Caco-2 (cell line): ENCODE measurements at regions of chr6 and their contacts with region 1.

Region 1: DNA sequence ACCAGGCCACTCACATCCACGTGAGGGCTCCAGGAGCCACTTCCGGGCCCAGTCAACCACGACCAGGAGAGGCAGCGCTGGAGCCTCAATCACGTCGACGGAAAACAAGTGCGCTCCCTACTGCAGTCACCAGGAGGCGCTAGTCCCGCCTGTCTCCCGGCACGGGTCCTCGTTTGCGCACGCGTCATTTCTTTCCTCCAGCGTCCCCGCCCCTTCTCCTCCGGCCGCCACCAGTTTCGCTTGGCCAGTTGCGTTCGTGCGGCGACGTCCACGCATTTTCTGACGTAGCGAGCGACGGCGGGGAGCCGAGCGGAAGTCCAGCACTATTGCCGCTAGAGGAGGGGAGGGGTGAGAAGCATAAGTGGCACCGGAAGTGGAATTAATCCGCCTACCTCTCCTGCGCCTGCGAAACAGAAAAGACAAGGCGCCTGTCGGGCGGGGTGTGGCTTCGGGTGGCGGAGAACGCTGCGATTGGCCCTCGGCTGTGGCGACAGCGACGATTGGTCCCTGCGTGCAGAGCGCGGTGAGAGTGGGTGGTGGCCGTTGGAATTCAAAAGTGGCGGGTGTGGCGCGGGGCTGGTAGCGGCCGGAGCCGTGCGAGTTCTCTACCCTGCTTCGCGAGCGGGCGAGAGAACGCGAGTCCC is at the start of gene KIFC1:
- DNase-seq: peak; percentile 99
- H3K4me3 ChIP-seq: peak within 1 kb of the TSS; percentile 91
- H3K4me3 Mint-ChIP-seq: peak within 1 kb of the TSS; percentile 85
- H3K27ac Mint-ChIP-seq: peak within 1 kb of the TSS; percentile 81
- H3K4me1 ChIP-seq: peaks cover 12% of the 10 kb centered on the region
- H3K4me1 Mint-ChIP-seq: peaks cover 29% of the 10 kb centered on the region
- H3K27me3 ChIP-seq: no peaks in the 10 kb centered on the region
- H3K27me3 Mint-ChIP-seq: no peaks in the 10 kb centered on the region
- CTCF ChIP-seq: peak; percentile 89 to 95
- total RNA-seq, gene KIFC1: 65.3 and 65.4 TPM in 2 replicates

Region 2: DNA sequence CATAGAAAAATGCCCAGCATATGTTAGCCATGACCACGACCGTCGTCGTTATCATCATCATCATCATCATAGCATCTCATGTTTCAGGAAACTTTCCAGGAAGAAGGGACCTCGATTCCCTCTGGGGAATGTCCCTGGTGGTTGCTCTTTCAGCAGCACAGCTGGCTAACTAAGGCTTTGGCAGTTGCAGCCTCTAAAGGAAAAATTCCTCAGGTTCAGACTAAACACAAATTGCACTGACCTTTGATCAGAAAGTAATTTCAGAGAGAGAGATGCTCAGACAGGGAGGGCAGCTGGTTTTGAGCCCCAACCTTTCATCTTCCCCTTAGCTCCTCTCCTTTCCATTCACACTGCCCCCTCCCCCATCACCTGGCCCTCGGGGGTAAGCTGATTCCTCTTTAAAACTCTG is 1451.1 kb before region 1 on chr6:
- CTCF ChIA-PET with region 1: no interaction called
- POLR2A ChIA-PET with region 1: no interaction called
- intact Hi-C with region 1: loop called (anchors 5 kb)
- DNase-seq: peak; percentile 66 to 73
- H3K4me3 ChIP-seq: no peak overlapping the region
- H3K4me3 Mint-ChIP-seq: peak overlapping the region; percentile 42
- H3K27ac Mint-ChIP-seq: peak overlapping the region; percentile 89
- H3K4me1 ChIP-seq: peaks cover 28% of the 10 kb centered on the region
- H3K4me1 Mint-ChIP-seq: peaks cover 26% of the 10 kb centered on the region
- H3K27me3 ChIP-seq: no peaks in the 10 kb centered on the region
- H3K27me3 Mint-ChIP-seq: no peaks in the 10 kb centered on the region
- CTCF ChIP-seq: peak; percentile 8

Region 3: DNA sequence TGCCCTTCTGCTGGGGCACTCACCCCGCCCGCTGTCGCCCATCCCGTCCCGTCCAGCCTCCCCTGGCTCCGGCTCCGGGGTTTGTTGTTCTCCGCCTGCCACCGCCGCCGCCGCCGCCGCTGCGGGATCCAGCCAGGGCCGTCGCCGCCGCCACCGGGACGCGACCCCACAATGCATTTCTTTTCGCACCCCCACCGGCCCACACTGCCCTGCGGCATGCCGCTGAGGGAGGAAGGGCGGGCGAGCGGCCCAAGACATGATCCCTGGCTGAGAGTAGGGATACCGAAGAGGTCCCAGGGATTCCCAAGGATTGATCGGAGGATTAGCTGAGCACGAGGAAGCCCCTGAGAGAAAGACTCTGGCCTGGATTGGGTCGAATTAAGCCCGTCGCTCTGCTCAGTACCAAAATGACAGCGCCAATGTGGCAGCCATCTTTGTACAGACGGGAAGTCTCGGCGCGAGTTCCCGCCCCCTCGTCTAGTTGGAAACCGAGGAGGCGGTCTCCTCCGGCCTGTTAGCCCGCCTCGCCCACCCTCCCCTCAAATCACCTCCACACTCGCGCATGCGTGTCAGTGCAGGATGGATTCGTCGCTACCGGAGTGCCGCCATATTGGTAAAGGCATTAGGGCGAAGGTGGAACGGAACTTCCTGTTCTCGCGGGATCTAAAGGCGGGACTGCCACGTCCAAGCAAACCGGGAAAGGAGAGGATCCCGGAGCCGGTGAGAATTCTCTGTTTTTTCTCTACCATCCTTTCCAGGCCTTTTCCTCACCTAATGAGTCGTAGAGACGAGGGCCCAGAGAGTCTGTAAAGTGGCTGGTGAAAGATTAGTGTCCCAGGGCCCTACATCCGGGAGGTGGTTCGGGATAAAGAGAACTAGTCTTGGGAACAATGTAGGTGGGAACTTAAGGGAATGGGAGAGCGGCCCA is 190.9 kb before region 1 on chr6 and contains the starts of genes RXRB and SLC39A7:
- CTCF ChIA-PET with region 1: no interaction called
- POLR2A ChIA-PET with region 1: no interaction called
- intact Hi-C with region 1: loop called (anchors 2 kb)
- DNase-seq: peak; percentile 97 to 99
- H3K4me3 ChIP-seq: peak within 1 kb of the TSS; percentile 67
- H3K4me3 Mint-ChIP-seq: peak within 1 kb of the TSS; percentile 100
- H3K27ac Mint-ChIP-seq: peak within 1 kb of the TSS; percentile 99
- H3K4me1 ChIP-seq: peaks cover 29% of the 10 kb centered on the region
- H3K4me1 Mint-ChIP-seq: peaks cover 43% of the 10 kb centered on the region
- H3K27me3 ChIP-seq: no peaks in the 10 kb centered on the region
- H3K27me3 Mint-ChIP-seq: no peaks in the 10 kb centered on the region
- CTCF ChIP-seq: no peak
- total RNA-seq, gene RXRB: 29.5 and 30.4 TPM in 2 replicates
- total RNA-seq, gene SLC39A7: 140 and 141 TPM in 2 replicates

Region 4: DNA sequence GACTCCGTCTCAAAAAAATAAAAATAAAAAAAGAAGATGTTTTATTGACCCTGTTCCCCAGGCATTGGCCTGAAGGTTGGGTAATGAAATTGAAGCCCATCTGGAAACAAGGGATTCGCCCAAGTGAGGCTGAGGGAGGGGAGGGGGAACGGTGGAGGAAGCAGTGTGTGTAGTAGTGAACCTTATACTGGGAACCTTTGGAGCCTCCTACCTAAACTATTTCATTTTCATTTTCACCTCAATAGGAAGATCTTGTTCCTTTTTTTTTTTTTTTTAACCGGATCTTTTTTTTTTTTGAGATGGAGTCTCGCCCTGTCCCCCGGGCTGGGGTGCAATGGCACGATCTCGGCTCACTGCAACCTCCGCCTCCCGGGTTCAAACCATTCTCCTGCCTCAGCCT is 60.7 kb before region 1 on chr6:
- CTCF ChIA-PET with region 1: no interaction called
- POLR2A ChIA-PET with region 1: no interaction called
- intact Hi-C with region 1: no loop called
- DNase-seq: no peak
- H3K4me3 ChIP-seq: no peak overlapping the region
- H3K4me3 Mint-ChIP-seq: no peak overlapping the region
- H3K27ac Mint-ChIP-seq: no peak overlapping the region
- H3K4me1 ChIP-seq: no peaks in the 10 kb centered on the region
- H3K4me1 Mint-ChIP-seq: no peaks in the 10 kb centered on the region
- H3K27me3 ChIP-seq: no peaks in the 10 kb centered on the region
- H3K27me3 Mint-ChIP-seq: no peaks in the 10 kb centered on the region
- CTCF ChIP-seq: no peak

Region 5: DNA sequence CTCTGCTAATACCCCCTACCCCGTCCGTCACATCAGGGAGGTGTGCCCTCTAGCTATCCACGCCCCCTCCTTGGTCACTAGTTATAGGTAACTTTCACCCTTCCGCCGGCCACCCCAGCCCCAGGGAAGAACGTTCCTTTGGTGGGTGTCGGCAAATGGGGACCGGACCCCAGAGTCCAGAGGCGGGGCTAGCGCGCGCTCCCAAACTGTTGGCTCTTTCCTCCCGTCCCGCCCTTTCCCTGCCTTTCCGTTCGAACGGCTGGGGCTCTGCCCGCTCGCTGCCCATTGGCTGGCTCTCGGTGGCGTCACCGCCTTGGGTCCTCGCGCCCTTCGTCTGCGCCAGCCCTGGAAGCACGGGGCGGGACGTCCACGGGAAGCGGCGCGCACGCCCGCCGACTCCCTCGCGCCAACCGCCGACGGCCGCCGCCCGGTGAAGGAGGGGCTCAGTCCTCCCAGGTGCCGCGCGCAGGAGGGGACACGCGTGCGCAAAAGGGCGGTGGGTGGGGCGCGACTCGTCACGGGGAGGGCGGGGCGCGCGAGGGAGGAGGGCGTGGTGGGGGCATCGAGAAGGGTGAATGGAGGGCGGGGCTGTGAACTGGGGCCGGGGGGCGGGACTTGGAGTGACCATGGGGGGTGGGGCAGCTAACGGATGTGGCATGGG is 18.8 kb after region 1 on chr6:
- CTCF ChIA-PET with region 1: interaction called, 6 read pairs
- POLR2A ChIA-PET with region 1: no interaction called
- intact Hi-C with region 1: loop called (anchors 1 kb)
- DNase-seq: peak; percentile 98 to 99
- H3K4me3 ChIP-seq: peak overlapping the region; percentile 86
- H3K4me3 Mint-ChIP-seq: peak overlapping the region; percentile 96
- H3K27ac Mint-ChIP-seq: peak overlapping the region; percentile 99
- H3K4me1 ChIP-seq: peaks cover 15% of the 10 kb centered on the region
- H3K4me1 Mint-ChIP-seq: peaks cover 13% of the 10 kb centered on the region
- H3K27me3 ChIP-seq: no peaks in the 10 kb centered on the region
- H3K27me3 Mint-ChIP-seq: no peaks in the 10 kb centered on the region
- CTCF ChIP-seq: no peak

Region 6: DNA sequence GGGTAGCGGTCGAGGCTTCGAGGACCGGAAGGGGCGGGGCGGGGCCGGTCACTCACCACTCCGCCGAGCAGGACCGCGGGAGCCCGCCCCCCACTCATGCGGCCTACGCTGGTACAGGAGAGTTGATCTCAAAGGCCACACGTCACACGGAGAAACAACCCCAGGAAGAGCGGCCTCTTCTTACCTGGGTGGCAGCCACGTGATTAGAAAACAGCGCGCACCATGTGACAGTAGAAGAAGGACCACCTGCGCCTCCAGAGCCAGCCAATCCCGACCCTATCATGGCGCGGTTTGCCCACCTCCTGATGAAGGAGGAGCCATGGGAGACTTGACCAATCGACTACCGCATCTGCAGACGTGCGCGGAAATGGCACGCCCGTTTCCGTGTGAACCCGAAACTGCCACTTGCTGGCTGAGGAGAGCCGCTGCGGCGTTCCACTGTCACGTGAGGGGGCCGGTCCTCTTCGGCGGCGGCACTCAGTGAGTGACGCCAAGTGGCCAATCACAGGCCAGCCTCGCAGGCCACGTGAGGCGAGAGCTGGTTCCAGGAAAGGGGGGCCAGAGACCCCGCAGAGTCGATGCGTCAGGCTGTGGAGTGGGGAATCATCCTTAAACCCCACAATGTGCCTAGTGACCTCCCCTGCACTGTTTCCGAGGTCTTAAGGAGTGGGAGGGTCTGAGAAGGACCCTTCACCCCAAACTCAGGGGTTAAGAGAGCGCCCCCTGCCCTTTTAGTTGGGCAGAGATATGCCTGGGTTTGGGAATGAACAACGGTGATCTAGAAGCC is 26.7 kb after region 1 on chr6 and contains the start of gene CUTA:
- CTCF ChIA-PET with region 1: no interaction called
- POLR2A ChIA-PET with region 1: no interaction called
- intact Hi-C with region 1: loop called (anchors 2 kb)
- DNase-seq: peak; percentile 98 to 99
- H3K4me3 ChIP-seq: peak within 1 kb of the TSS; percentile 68
- H3K4me3 Mint-ChIP-seq: peak within 1 kb of the TSS; percentile 90
- H3K27ac Mint-ChIP-seq: peak within 1 kb of the TSS; percentile 99
- H3K4me1 ChIP-seq: peaks cover 18% of the 10 kb centered on the region
- H3K4me1 Mint-ChIP-seq: peaks cover 6% of the 10 kb centered on the region
- H3K27me3 ChIP-seq: no peaks in the 10 kb centered on the region
- H3K27me3 Mint-ChIP-seq: peaks cover 6% of the 10 kb centered on the region
- CTCF ChIP-seq: peak; percentile 41 to 59
- total RNA-seq, gene CUTA: 166 and 177 TPM in 2 replicates

Region 7: DNA sequence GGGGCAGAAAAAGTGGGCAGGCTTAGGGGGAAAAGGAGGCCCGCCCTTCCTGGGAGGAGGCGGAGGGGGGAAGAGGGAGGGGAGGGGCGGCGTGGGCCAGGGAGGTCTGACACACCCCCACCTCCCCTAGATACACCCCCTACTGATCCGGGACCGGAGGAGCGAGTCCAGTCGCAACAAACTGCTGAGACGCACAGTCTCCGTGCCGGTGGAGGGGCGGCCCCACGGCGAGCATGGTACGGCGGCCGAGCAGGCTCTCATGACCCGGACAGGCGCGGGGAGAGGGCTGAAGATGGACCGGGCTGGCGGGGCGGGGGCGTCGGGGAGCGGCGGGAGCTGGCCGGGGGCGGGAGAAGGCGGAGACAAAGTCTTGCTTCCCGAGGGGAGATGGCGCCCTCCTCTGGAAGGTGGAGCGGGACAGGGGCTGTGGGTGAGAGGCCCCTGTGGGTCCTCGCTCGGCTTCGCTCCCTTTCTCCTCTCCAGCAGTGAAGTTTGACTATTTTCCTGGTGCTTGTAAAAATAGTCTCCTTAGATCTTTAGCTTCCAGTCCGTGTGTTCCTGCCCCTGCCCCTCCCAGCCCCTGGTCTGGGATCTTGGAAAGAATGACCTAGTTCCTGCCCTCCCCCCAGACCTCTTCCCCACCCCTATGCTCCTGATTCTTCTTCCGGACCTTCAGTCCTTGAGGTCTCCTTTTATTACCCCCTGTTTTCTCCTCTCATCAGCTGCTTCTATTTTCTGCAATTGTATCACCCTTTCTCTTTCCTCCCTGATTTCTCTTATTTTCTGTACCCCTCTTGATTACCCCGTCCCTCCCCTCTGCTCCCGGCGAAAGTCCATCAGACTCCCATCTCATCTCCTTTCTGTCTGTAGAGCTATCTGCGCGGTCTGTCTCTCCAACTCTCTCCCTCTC is 34.5 kb after region 1 on chr6:
- CTCF ChIA-PET with region 1: interaction called, 9 read pairs
- POLR2A ChIA-PET with region 1: interaction called, 3 read pairs
- intact Hi-C with region 1: loop called (anchors 1 kb)
- DNase-seq: peak; percentile 91 to 93
- H3K4me3 ChIP-seq: peak overlapping the region; percentile 71
- H3K4me3 Mint-ChIP-seq: peak overlapping the region; percentile 81
- H3K27ac Mint-ChIP-seq: peak overlapping the region; percentile 75
- H3K4me1 ChIP-seq: peaks cover 39% of the 10 kb centered on the region
- H3K4me1 Mint-ChIP-seq: peaks cover 23% of the 10 kb centered on the region
- H3K27me3 ChIP-seq: no peaks in the 10 kb centered on the region
- H3K27me3 Mint-ChIP-seq: peaks cover 7% of the 10 kb centered on the region
- CTCF ChIP-seq: peak; percentile 74 to 82